ENCODE measurements at regions of chr5 and their contacts with region 1.

Region 1: DNA sequence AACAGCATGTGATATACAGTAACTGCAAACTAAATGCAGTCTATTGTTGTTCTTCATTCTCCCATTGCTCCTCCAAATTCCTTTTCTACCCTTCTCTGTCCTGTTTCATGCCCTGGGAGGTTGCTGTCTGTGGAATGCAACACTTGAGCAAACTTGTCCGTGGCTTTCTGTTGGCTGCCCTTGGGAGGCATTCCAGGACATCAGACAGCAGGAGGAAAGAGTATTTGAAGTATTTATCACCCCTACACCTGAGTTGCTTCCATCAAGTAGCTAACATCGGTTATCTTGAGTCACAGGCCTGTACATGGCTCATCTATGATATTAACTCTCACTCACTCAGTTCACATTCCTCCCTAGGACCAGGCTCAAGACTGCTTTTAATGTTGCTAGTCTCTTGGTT is 803.4 kb upstream of the CDH6 start:
- DNase-seq: no peak
- H3K4me3 Mint-ChIP-seq: no peak overlapping the region
- H3K27ac Mint-ChIP-seq: no peak overlapping the region
- H3K4me1 Mint-ChIP-seq: peaks cover 27% of the 10 kb centered on the region
- H3K27me3 Mint-ChIP-seq: no peaks in the 10 kb centered on the region
- CTCF ChIP-seq: no peak

Region 2: GRCh38 chr5:30401479-30402058 is 11.5 kb after region 1 on chr5:
- CTCF ChIA-PET with region 1: interaction called, 16 read pairs
- POLR2A ChIA-PET with region 1: no interaction called
- intact Hi-C with region 1: no loop called
- DNase-seq: peak; percentile 68
- H3K4me3 Mint-ChIP-seq: no peak overlapping the region
- H3K27ac Mint-ChIP-seq: no peak overlapping the region
- H3K4me1 Mint-ChIP-seq: peaks cover 4% of the 10 kb centered on the region
- H3K27me3 Mint-ChIP-seq: no peaks in the 10 kb centered on the region
- CTCF ChIP-seq: peak; percentile 59

Measured in MCF 10A (cell line).